PC-9 (cell line): ENCODE measurements at regions of chr1 and their contacts with region 1.

Region 1: GRCh38 chr1:205523891-205524793 is 19.7 kb downstream of the CDK18 start:
- DNase-seq: peak; percentile 61 to 72
- H3K4me3 ChIP-seq: no peak overlapping the region
- H3K27ac ChIP-seq: no peak overlapping the region
- H3K4me1 ChIP-seq: no peaks in the 10 kb centered on the region
- H3K27me3 ChIP-seq: no peaks in the 10 kb centered on the region
- CTCF ChIP-seq: peak; percentile 90

Region 2: GRCh38 chr1:205335643-205336091 is 188.5 kb before region 1 on chr1:
- CTCF ChIA-PET with region 1: interaction called, 4 read pairs
- POLR2A ChIA-PET with region 1: no interaction called
- intact Hi-C with region 1: loop called (anchors 1 kb)
- DNase-seq: peak; percentile 63 to 85
- H3K4me3 ChIP-seq: no peak overlapping the region
- H3K27ac ChIP-seq: no peak overlapping the region
- H3K4me1 ChIP-seq: peaks cover 3% of the 10 kb centered on the region
- H3K27me3 ChIP-seq: peaks cover under 1% of the 10 kb centered on the region; the same call in 1 of the 2 replicates
- CTCF ChIP-seq: peak; percentile 88

Region 3: GRCh38 chr1:205354259-205354904 is 169.8 kb before region 1 on chr1:
- CTCF ChIA-PET with region 1: interaction called, 18 read pairs
- POLR2A ChIA-PET with region 1: no interaction called
- intact Hi-C with region 1: no loop called
- DNase-seq: peak; percentile 43
- H3K4me3 ChIP-seq: no peak overlapping the region
- H3K27ac ChIP-seq: no peak overlapping the region
- H3K4me1 ChIP-seq: 0 out of 2 replicates have a peak, but pooled peaks cover 2% of the 10 kb centered on the region
- H3K27me3 ChIP-seq: peaks cover 26% of the 10 kb centered on the region
- CTCF ChIP-seq: peak; percentile 86

Region 4: GRCh38 chr1:205396967-205397616 is 127.0 kb before region 1 on chr1:
- CTCF ChIA-PET with region 1: interaction called, 4 read pairs
- POLR2A ChIA-PET with region 1: no interaction called
- intact Hi-C with region 1: loop called (anchors 1 kb)
- DNase-seq: peak; percentile 30 to 51
- H3K4me3 ChIP-seq: no peak overlapping the region
- H3K27ac ChIP-seq: no peak overlapping the region
- H3K4me1 ChIP-seq: no peaks in the 10 kb centered on the region
- H3K27me3 ChIP-seq: no peaks in the 10 kb centered on the region
- CTCF ChIP-seq: peak; percentile 89

Region 5: DNA sequence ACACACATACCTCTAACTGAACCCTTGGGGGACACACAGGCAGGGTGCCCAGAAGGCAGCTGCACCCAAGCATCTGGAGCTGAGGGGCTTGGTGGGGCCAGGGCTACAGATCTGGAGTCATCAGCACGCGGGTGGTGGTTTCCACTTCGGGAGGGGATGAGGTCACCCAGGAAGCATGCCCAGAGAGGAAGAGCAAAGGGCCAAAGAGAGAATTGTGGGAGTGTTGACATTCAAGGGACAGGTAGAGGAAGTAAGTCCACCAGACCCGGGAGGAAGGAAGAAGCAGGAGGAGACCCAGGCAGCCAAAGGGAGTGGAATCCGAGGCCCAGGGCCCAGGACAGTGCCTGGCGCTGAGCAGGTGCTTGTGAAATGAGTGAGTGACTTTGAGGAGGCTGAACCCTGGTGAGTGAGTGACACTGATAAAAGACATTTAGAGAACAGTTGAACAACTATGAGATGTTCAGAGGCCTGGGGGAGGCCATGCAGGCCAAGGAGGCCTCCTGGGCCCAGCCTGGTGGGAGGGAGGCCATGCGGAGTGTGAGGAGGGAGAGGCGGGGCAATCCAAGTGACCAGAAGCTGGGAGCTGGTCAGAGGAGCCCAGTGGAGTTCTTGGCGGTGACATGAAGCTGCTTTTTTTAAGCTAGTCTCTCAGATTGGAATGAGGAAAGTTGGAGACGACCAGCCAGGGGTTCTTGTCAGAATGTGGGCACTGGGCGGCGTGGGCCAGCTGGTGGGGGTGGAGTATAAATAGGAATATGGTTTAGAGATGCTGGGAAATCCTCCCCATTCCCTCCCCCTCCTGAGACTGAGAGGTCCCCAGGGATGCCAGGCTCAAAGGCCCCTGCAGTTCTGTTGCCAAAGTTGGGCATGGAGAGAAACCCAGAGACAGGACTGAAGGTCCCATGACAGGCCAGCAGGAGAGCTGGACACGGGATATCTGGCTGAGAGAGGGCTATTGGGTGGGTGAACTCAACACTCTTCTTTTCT is 11.8 kb before region 1 on chr1:
- CTCF ChIA-PET with region 1: interaction called, 12 read pairs
- POLR2A ChIA-PET with region 1: no interaction called
- intact Hi-C with region 1: no loop called
- DNase-seq: no peak
- H3K4me3 ChIP-seq: no peak overlapping the region
- H3K27ac ChIP-seq: no peak overlapping the region
- H3K4me1 ChIP-seq: peaks cover 8% of the 10 kb centered on the region
- H3K27me3 ChIP-seq: no peaks in the 10 kb centered on the region
- CTCF ChIP-seq: no peak